ENCODE measurements at regions of chr2 and their contacts with region 1.

Region 1: GRCh38 chr2:227884511-227884947 is 13.1 kb downstream of the DAW1 start:
- DNase-seq: peak; percentile 30
- H3K4me3 Mint-ChIP-seq: no peak overlapping the region
- H3K27ac Mint-ChIP-seq: no peak overlapping the region
- H3K4me1 Mint-ChIP-seq: peaks cover 5% of the 10 kb centered on the region
- H3K27me3 Mint-ChIP-seq: peaks cover 4% of the 10 kb centered on the region

Region 2: DNA sequence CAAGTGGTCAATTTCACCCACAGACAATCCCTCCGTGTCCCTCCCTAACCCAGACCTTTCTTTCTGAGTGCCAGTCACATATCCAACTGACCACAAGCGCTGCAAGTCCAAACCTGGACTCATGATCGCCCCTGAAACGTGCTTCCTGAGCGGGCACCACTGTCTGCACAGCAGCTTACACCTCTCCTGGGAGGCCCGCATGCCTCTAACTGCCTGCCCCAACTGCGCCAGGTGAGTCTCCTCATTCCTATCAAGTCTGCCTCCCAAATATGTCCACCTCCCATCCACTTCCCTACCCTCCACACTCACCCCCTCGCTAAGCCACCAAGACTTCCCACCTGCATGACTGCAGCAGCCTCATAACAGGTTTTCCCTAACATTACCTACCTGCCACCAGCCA is 753.9 kb before region 1 on chr2:
- intact Hi-C with region 1: loop called (anchors 1 kb)
- DNase-seq: no peak
- H3K4me3 Mint-ChIP-seq: no peak overlapping the region
- H3K27ac Mint-ChIP-seq: no peak overlapping the region
- H3K4me1 Mint-ChIP-seq: no peaks in the 10 kb centered on the region
- H3K27me3 Mint-ChIP-seq: peaks cover 10% of the 10 kb centered on the region

Region 3: GRCh38 chr2:227655454-227655853 is 229.1 kb before region 1 on chr2:
- intact Hi-C with region 1: loop called (anchors 1 kb)
- DNase-seq: no peak
- H3K4me3 Mint-ChIP-seq: no peak overlapping the region
- H3K27ac Mint-ChIP-seq: no peak overlapping the region
- H3K4me1 Mint-ChIP-seq: no peaks in the 10 kb centered on the region
- H3K27me3 Mint-ChIP-seq: peaks cover 3% of the 10 kb centered on the region

Region 4: GRCh38 chr2:229714736-229715541 is 1830.4 kb after region 1 on chr2:
- intact Hi-C with region 1: loop called (anchors 10 kb)
- DNase-seq: peak; percentile 8
- H3K4me3 Mint-ChIP-seq: no peak overlapping the region
- H3K27ac Mint-ChIP-seq: no peak overlapping the region
- H3K4me1 Mint-ChIP-seq: no peaks in the 10 kb centered on the region
- H3K27me3 Mint-ChIP-seq: peaks cover 64% of the 10 kb centered on the region

Measured in activated T-helper 1 cell treated with anti-CD3 and anti-CD28 coated beads, Interleukin-12 subunit alpha, Interleukin-12 subunit beta, Interleukin-2, Interleukin-4 antibody, amounts not matched to agents 30 ng/mL and 10 ng/mL and 1 ng/mL, durations not matched to agents 14 hours and 24 hours and 36 hours (primary cell).